ENCODE measurements at regions of chr9 and their contacts with region 1.

Region 1: GRCh38 chr9:22008736-22009562 is at the start of gene CDKN2B:
- DNase-seq: peak; percentile 92
- H3K4me3 ChIP-seq: peak within 1 kb of the TSS; percentile 83
- H3K27ac ChIP-seq: peak within 1 kb of the TSS; percentile 95
- H3K27me3 ChIP-seq: no peaks in the 10 kb centered on the region
- CTCF ChIP-seq: peak; percentile 86
- polyA plus RNA-seq, gene CDKN2B: 10.2 and 10.7 TPM in 2 replicates

Region 2: GRCh38 chr9:21852754-21853153 is 156.2 kb before region 1 on chr9:
- CTCF ChIA-PET with region 1: interaction called, 13 read pairs
- POLR2A ChIA-PET with region 1: no interaction called
- DNase-seq: no peak
- H3K4me3 ChIP-seq: no peak overlapping the region
- H3K27ac ChIP-seq: no peak overlapping the region
- H3K27me3 ChIP-seq: no peaks in the 10 kb centered on the region
- CTCF ChIP-seq: no peak

Region 3: DNA sequence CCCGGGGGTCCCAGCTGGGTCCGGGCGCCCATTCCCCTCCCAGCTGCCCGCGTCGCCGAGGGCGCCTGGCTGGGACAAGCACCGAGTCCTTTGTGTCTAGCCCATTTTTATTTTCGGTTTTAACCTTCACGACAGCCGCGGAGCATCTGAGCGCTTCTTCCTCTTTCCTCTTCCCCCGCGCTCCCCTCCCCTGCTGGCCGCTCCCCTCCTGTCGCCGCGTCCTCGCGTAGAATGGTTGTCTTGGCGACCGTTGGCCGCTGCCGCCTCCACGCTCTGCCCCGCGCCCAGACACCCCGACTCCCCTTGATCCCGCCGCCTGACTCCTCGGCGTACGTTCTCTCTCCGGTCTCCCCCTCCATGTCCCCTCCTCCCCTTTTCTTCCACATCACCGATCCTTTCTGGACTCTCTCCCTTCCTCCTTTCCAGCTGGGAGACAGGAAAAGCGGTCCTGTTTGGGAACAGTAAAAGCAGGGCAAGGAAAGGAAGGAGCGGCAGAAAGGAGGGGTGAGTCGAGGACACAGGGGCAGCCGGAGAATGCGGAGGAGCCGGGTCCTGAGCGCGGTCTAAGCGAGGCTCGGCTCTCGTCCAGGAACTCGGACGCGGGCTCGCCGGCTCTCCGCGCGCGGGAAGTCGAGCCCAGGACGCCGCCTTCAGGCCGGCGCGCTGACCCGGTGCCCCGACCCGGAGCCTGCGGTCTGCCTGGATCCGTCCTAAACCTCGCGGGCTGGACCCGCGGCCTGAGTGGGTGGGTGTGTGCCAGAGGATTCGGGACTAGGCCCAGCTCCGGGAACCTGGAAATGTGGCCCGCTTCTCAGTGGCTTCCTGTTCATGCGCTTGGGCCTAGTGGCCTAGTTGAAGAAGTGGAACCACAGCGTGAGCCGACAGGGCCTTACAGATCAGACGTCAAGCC is 13.5 kb before region 1 on chr9:
- CTCF ChIA-PET with region 1: interaction called, 69 read pairs
- POLR2A ChIA-PET with region 1: interaction called, 6 read pairs
- DNase-seq: no peak
- H3K4me3 ChIP-seq: peak overlapping the region; percentile 86
- H3K27ac ChIP-seq: peak overlapping the region; percentile 85
- H3K27me3 ChIP-seq: no peaks in the 10 kb centered on the region
- CTCF ChIP-seq: peak; percentile 37

Region 4: DNA sequence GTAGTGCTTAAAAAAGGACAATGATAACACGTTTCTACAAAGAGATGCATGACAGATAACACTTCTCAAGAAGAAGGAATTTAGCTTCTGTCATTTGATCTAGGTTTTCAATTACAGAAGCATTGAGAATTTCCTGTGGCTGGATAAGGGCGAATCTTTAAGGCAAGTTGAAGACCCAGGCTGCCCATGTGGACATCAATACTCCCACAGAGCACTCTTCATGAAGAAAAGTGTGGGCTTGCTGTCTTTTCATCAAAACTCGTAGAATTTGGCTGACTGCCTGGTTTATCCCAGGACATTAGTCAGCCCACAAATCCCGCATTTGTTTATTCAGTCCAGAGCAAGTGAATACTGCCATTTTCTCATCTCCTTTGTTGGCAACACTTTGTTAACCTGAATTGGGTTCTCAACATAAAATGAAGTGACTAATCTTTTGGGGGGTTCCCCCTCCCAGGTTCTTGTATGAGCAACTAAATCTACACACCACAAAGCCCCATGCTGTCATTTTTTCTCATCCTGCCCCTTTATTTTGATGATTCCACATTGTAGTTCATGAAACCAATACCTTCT is 43.5 kb after region 1 on chr9:
- CTCF ChIA-PET with region 1: interaction called, 24 read pairs
- POLR2A ChIA-PET with region 1: no interaction called
- DNase-seq: peak; percentile 91
- H3K4me3 ChIP-seq: no peak overlapping the region
- H3K27ac ChIP-seq: peak overlapping the region; percentile 39
- H3K27me3 ChIP-seq: no peaks in the 10 kb centered on the region
- CTCF ChIP-seq: no peak

Region 5: DNA sequence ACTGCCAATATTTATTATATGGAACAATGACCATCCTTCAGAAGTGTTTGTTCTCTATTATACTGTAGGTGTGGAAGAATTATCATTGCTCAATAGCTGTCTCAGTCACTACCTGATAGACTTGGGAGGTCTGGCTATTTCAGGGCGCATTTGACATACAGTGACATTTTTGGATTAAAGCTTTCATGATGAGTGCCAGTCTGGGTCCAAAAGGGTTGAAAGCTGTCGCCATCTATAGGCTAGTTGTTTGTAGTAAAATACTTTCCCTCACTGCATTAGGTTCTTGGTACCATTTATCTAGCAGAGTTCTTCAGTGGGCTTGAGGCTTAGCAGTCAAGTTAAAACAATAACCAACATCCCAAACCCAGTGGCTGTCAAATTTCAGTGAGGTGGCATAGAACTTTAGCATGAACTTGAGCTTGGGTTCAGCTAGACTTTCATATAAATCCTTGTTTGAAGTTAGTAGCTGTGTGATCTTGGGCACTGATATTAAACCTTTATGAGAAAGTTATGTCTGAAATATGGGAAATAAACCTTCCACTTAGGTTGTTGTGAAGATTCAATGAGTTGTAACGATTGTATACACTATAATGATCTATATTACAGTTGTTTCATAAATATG is 110.7 kb after region 1 on chr9:
- CTCF ChIA-PET with region 1: interaction called, 78 read pairs
- POLR2A ChIA-PET with region 1: interaction called, 10 read pairs
- DNase-seq: no peak
- H3K4me3 ChIP-seq: no peak overlapping the region
- H3K27ac ChIP-seq: no peak overlapping the region
- H3K27me3 ChIP-seq: no peaks in the 10 kb centered on the region
- CTCF ChIP-seq: peak; percentile 59

Region 6: GRCh38 chr9:22228542-22228941 is 219.6 kb after region 1 on chr9:
- CTCF ChIA-PET with region 1: interaction called, 178 read pairs
- POLR2A ChIA-PET with region 1: no interaction called
- DNase-seq: no peak
- H3K4me3 ChIP-seq: no peak overlapping the region
- H3K27ac ChIP-seq: no peak overlapping the region
- H3K27me3 ChIP-seq: no peaks in the 10 kb centered on the region
- CTCF ChIP-seq: peak; percentile 48

Measured in AG04450 (cell line).